K562 (cell line): ENCODE measurements at regions of chr11 and their contacts with region 1.

Region 1: DNA sequence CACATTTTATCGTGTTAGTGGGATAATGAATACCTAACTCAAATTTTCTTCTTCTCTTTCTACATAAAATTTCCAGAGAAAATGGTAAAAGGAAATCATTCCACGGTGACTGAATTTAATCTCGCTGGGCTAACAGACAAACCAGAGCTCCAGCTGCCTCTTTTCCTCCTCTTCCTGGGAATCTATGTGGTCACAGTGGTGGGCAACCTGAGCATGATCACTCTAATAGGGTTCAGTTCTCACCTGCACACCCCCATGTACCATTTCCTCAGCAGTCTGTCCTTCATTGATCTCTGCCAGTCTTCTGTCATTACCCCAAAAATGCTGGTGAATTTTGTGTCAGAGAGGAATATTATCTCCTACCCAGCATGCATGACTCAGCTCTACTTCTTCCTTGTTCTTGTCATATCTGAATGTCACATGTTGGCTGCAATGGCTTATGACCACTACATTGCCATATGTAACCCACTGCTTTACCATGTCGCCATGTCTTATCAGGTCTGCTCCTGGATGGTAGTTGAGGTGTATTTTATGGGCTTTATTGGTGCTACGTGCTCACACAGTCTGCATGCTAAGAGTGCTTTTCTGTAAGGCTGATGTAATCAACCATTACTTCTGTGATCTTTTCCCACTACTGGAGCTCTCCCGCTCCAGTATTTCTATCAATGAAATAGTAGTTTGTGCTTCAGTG is 24.1 kb downstream of the OR10D3 start:
- DNase-seq: peak; percentile 22 to 91 (median 60)
- ATAC-seq: peak; percentile 92
- H3K4me3 ChIP-seq: no peak overlapping the region
- H3K27ac ChIP-seq: peak overlapping the region; percentile 91
- H3K4me1 ChIP-seq: peaks cover 27 to 32% of the 10 kb centered on the region in 2 experiments
- H3K27me3 ChIP-seq: no peaks in the 10 kb centered on the region
- CTCF ChIP-seq: no peak
- EP300 ChIP-seq: peak; percentile 93
- POLR2A ChIP-seq: no peak
- RAD21 ChIP-seq: no peak; a peak in 1 of 4 replicates

Region 2: GRCh38 chr11:124174001-124174583 is 33.2 kb before region 1 on chr11:
- CTCF ChIA-PET with region 1: no interaction called
- POLR2A ChIA-PET with region 1: interaction called, 4 read pairs
- in situ Hi-C with region 1: no loop called
- intact Hi-C with region 1: loop called (anchors 5 kb)
- DNase-seq: peak; percentile 33 to 85 (median 47)
- ATAC-seq: peak; percentile 54
- H3K4me3 ChIP-seq: no peak overlapping the region
- H3K27ac ChIP-seq: no peak overlapping the region
- H3K4me1 ChIP-seq: peaks cover 5 to 17% of the 10 kb centered on the region in 2 experiments; a peak in 4 of 5 replicates
- H3K27me3 ChIP-seq: no peaks in the 10 kb centered on the region
- CTCF ChIP-seq: no peak
- EP300 ChIP-seq: no peak
- POLR2A ChIP-seq: no peak
- RAD21 ChIP-seq: no peak

Region 3: DNA sequence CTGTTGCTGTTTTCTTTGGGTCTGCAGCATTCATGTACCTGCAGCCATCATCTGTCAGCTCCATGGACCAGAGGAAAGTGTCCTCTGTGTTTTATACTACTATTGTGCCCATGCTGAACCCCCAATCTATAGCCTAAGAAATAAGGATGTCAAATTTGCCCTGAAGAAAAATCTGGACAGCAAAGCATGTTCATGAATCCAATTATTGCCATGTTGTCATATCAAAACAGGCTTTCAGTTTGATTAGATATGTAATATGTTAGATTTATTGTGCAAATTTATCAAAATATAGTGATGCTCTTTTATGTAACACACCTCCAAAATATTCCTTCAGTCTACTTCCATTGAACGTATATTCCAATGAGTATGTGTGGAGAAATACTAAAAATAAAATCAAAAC is 18.2 kb after region 1 on chr11:
- CTCF ChIA-PET with region 1: no interaction called
- POLR2A ChIA-PET with region 1: interaction called, 7 read pairs
- in situ Hi-C with region 1: no loop called
- intact Hi-C with region 1: loop called (anchors 2 kb)
- DNase-seq: no peak
- ATAC-seq: no peak
- H3K4me3 ChIP-seq: no peak overlapping the region
- H3K27ac ChIP-seq: peak overlapping the region; percentile 97; the same call in 2 of the 3 replicates
- H3K4me1 ChIP-seq: peaks cover 9 to 20% of the 10 kb centered on the region in 2 experiments
- H3K27me3 ChIP-seq: no peaks in the 10 kb centered on the region
- CTCF ChIP-seq: no peak
- EP300 ChIP-seq: no peak
- POLR2A ChIP-seq: no peak
- RAD21 ChIP-seq: no peak

Region 4: GRCh38 chr11:124277804-124278203 is 70.6 kb after region 1 on chr11:
- CTCF ChIA-PET with region 1: no interaction called
- POLR2A ChIA-PET with region 1: no interaction called
- in situ Hi-C with region 1: no loop called
- intact Hi-C with region 1: loop called (anchors 5 kb)
- DNase-seq: no peak
- ATAC-seq: no peak
- H3K4me3 ChIP-seq: no peak overlapping the region
- H3K27ac ChIP-seq: no peak overlapping the region
- H3K4me1 ChIP-seq: peaks cover 6 to 13% of the 10 kb centered on the region in 2 experiments
- H3K27me3 ChIP-seq: no peaks in the 10 kb centered on the region
- CTCF ChIP-seq: peak in 2 of 3 experiments; percentile 3 to 30; a peak in 2 of 6 replicates
- EP300 ChIP-seq: no peak
- POLR2A ChIP-seq: no peak
- RAD21 ChIP-seq: peak; percentile 6 to 44; a peak in 2 of 4 replicates